HCT116 (cell line): ENCODE measurements at regions of chr10 and their contacts with region 1.

Region 1: GRCh38 chr10:71255808-71256660 is 43.7 kb downstream of the UNC5B start:
- DNase-seq: peak; percentile 56
- ATAC-seq: peak; percentile 87
- H3K4me3 ChIP-seq: peak overlapping the region; percentile 31 to 43
- H3K27ac ChIP-seq: peak overlapping the region; percentile 38
- H3K4me1 ChIP-seq: peaks cover 56 to 74% of the 10 kb centered on the region in 2 experiments
- H3K27me3 ChIP-seq: no peaks in the 10 kb centered on the region
- CTCF ChIP-seq: no peak
- POLR2A ChIP-seq: no peak
- RAD21 ChIP-seq: no peak

Region 2: DNA sequence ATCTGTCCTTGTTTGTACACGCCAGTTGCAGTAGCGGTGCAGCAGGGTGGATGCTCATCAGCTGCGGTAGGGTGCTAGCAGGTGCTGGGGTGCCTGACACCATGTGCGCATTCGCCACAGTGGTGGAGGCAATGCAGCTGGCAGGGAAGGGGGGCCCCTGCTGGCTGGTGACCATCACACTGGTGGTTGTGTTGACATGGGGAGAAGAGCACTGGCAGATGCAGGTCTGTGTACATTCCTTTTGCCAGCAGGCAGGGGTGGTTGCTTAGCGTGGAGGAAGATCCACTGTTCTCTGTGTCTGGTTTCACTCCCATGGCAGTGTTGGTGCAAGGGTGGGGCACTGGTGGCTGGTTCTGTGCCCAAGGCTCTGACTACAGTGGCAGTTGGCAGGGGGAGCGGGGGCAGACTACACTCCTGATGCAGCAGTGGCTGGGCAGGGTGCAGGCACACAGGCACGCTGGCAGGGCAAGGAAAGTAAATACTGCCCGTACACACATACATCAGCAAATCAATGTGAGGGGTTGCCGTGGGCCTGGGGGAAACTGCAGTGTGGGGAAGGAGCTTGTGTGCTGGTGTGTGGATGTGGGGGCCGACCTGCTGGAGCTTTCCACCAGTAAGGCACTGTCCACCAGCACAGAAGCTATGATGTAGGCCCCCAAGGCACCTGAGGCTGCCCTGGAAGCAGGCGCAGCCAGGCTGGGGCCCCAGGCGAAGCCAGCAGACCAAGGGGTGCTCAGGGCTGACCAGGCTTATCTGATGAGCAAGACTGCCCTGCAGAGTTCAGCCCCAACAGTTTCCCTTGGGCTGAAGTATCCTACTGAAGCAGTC is 130.9 kb before region 1 on chr10:
- CTCF ChIA-PET with region 1: no interaction called
- POLR2A ChIA-PET with region 1: no interaction called
- RAD21 ChIA-PET with region 1: no interaction called
- intact Hi-C with region 1: no loop called
- DNase-seq: no peak
- ATAC-seq: no peak
- H3K4me3 ChIP-seq: no peak overlapping the region
- H3K27ac ChIP-seq: no peak overlapping the region
- H3K4me1 ChIP-seq: peaks cover 0 to 8% of the 10 kb centered on the region in 2 experiments; a peak in 1 of 4 replicates
- H3K27me3 ChIP-seq: no peaks in the 10 kb centered on the region
- CTCF ChIP-seq: no peak
- POLR2A ChIP-seq: no peak
- RAD21 ChIP-seq: no peak

Region 3: GRCh38 chr10:71270301-71271220 is 14.5 kb after region 1 on chr10:
- CTCF ChIA-PET with region 1: interaction called, 45 read pairs
- POLR2A ChIA-PET with region 1: interaction called, 7 read pairs
- RAD21 ChIA-PET with region 1: no interaction called
- intact Hi-C with region 1: no loop called
- DNase-seq: peak; percentile 68
- ATAC-seq: peak; percentile 91
- H3K4me3 ChIP-seq: no peak overlapping the region
- H3K27ac ChIP-seq: no peak overlapping the region
- H3K4me1 ChIP-seq: peaks cover 24 to 34% of the 10 kb centered on the region in 2 experiments; a peak in 3 of 4 replicates
- H3K27me3 ChIP-seq: no peaks in the 10 kb centered on the region
- CTCF ChIP-seq: peak; percentile 32 to 85 (median 65); a peak in 5 of 6 replicates
- POLR2A ChIP-seq: no peak
- RAD21 ChIP-seq: peak; percentile 57

Region 4: DNA sequence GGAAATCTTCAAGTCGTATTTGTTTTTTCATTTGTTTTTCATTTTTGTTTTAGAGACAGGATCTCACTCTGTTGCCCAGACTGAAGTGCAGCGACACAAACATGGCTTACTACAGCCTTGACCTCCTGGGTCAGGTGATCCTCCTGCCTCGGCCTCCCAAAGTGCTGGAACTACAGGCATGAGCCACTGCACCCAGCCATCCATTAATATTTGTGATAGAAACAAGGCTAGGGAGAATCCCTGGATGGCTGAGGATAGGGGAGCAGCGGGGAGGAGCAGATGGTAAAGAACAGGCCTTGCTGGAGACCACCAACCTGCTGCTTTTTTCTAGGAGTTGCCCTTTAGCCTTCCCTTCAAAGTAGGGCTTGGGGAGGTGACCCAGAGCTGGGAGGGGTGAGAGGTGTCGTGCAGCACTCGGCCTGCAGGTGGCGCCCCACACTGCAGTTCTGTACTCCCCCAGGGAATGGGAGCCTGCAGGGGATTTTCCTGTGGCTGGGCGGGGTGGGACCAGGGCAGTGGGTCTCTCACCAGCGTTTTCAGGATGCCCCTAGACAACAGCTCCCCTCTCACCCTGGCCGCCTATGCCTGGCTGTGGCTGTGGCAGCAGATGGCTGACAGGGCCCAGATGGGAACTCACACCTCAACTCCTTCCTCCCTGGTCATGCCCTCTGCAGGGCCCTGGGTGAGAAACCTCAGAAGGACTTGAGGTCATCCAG is 128.1 kb after region 1 on chr10:
- CTCF ChIA-PET with region 1: no interaction called
- POLR2A ChIA-PET with region 1: no interaction called
- RAD21 ChIA-PET with region 1: no interaction called
- intact Hi-C with region 1: no loop called
- DNase-seq: no peak
- ATAC-seq: peak; percentile 98
- H3K4me3 ChIP-seq: no peak overlapping the region
- H3K27ac ChIP-seq: no peak overlapping the region
- H3K4me1 ChIP-seq: peaks cover 0 to 2% of the 10 kb centered on the region in 2 experiments; a peak in 1 of 4 replicates
- H3K27me3 ChIP-seq: no peaks in the 10 kb centered on the region; the same call in 1 of the 2 replicates
- CTCF ChIP-seq: peak; percentile 90 to 97 (median 96)
- POLR2A ChIP-seq: no peak
- RAD21 ChIP-seq: peak; percentile 92

Region 5: DNA sequence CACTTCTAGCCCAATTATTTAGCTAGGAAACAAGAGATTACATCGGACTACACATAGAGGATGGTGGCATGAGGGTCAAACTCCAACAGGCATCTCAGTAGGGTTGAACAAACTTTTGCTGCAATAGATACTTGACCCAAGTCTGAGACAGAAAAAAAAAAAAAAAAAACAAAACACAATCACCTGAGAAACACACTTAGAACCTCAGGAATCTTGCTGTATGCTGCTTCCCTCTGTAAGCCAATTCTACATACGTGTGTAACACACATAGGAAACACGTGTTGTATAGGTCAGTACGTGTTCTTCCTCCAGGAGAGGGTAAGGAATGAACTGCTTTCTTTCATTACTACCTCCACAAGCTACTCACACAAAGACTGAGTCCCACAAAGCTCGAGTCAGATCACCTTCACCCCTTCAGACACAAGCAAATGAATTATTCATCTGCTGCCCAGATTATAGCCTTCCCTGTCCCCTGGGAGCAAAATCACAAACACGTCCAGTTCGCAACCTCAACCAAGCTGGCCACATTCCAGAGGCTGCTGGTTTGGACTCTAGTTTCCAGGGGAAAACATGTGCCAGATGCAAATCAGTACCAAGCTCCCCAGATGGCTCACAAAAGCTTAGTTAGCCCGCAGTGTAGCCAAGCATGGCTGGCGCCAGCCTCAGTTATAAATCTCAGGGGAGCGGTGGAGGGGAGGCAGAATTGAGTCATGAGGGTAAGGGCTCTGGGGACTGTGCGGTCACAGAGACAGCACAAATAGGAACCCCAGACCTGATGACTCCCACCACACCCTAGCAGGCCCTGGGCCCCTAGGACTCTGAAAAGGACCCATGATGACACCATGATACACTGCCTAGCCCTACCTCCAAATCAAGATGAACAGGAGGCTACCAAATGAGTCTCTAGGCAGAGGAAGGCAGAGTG is 579.9 kb after region 1 on chr10:
- CTCF ChIA-PET with region 1: no interaction called
- POLR2A ChIA-PET with region 1: no interaction called
- RAD21 ChIA-PET with region 1: no interaction called
- intact Hi-C with region 1: no loop called
- DNase-seq: no peak
- ATAC-seq: no peak
- H3K4me3 ChIP-seq: no peak overlapping the region
- H3K27ac ChIP-seq: no peak overlapping the region
- H3K4me1 ChIP-seq: peaks cover 18 to 44% of the 10 kb centered on the region in 2 experiments
- H3K27me3 ChIP-seq: no peaks in the 10 kb centered on the region
- CTCF ChIP-seq: no peak
- POLR2A ChIP-seq: no peak
- RAD21 ChIP-seq: no peak